Left cardiac atrium (tissue), 4 donors: ENCODE measurements at regions of chr15 and their contacts with region 1.

Region 1: GRCh38 chr15:71011503-71012155 is 103.6 kb upstream of the THSD4 start:
- DNase-seq: no peak
- ATAC-seq: peak; percentile 57 to 87

Region 2: DNA sequence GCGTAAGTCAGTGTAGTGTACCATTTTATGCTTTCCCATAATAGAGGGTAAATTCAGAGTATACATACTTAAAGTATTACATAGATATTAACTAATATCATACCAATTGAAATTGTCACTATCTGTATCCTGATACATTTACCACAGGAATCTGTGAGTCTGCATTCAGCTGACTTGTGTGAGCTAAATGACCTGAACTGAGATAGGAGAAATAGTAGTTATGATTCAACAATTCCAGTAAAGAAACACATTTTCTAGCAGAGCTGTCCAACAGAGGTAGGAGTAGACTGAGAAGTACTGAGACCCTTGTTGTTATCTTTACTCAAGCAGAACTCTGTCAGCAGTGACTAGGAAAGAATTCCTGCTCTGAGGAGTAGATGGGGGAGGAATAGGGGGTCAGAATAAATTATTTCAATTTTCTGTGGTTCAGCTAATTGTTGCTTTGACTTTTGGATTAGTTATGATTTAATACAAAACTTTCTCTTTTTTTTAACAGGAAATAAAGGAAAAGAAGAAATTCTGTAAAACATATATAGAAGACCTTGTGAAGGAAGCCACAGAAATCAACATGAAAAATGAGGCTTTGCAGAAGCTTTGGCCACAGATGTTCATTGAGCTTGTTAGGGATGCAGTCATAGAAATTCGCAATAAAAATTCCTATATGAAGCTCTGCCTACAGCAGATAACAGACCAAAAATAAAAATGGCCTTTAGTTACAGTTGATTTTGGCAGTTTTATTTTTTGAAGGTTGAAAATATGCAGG is 37.5 kb after region 1 on chr15:
- intact Hi-C with region 1: no loop called
- DNase-seq: no peak
- ATAC-seq: peak in 1 of 2 donors; percentile 85

Region 3: DNA sequence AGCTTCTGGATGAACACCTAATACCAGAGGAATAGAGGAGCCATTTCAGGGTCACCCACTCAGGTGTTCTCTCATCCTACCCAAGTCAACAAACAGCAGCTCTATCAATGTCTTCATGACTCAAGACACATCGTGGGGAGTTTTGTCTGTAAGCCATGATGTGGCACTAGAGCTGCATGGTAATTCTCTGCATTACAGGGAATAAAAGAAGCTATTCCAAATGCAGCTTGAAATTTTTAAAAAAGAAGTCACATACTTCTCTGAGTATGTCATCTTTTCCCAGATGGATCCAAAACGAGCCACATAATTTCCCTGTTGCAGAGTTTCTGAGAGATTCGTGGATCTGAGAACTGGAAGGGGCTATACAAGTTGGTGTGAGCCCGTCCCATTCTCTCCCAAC is 97.5 kb after region 1 on chr15:
- intact Hi-C with region 1: loop called in 1 of 2 experiments (anchors 5 kb)
- DNase-seq: no peak
- ATAC-seq: no peak

Region 4: GRCh38 chr15:71252044-71252906 is 240.6 kb after region 1 on chr15:
- intact Hi-C with region 1: loop called in 1 of 2 experiments (anchors 10 kb)
- DNase-seq: no peak
- ATAC-seq: peak in 1 of 2 donors; percentile 72

Region 5: DNA sequence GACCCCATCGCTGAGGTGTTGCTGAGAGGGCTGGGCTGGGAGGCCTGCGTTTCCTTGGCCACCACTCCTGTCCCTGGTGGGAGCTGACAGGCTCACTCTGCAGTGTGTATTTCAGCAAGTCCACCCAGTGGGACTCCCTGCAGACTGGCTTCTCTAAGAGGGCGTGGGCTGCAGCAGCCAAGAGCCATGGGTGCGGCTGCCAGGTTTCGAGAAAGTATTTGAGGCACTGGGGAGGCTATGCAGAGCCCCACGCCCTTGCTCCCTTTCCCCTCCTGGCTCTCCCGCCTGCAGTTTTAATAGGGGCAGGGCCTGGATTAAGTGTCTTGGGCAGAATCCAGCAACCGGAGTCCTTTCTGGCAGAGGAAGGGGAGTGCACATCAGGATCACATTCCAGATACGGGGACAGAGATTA is 345.7 kb after region 1 on chr15:
- intact Hi-C with region 1: loop called in 1 of 2 experiments (anchors 10 kb)
- DNase-seq: peak; percentile 43
- ATAC-seq: peak; percentile 89 to 92

Region 6: GRCh38 chr15:71440489-71441110 is 429.0 kb after region 1 on chr15:
- intact Hi-C with region 1: loop called in 1 of 2 experiments (anchors 2 kb)
- DNase-seq: no peak
- ATAC-seq: peak; percentile 20 to 25